ENCODE measurements at regions of chr19 and their contacts with region 1.

Region 1: GRCh38 chr19:46813839-46814363 is 25.5 kb upstream of the SLC1A5 start:
- DNase-seq: no peak
- H3K4me3 ChIP-seq: no peak overlapping the region
- H3K27ac ChIP-seq: no peak overlapping the region
- H3K4me1 ChIP-seq: no peaks in the 10 kb centered on the region
- H3K27me3 ChIP-seq: no peaks in the 10 kb centered on the region
- CTCF ChIP-seq: no peak

Region 2: DNA sequence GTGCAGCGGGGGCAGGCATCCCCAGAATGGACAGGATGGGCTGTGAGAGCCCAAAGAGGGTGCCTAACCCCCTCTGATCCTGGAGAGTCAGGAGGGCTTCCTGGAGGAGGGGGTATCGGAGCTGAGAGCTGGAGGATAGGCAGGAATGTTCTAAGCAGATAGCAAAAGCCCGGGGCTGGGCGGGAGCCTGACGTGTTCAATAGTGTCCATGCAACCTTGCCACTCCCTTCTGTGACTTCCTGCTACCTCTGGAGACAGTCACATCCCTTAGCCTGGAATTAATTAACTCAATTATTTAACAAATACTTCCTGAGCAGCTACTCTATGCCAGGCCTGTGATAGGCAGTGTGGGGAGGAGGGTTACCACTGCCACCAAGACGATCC is 25.8 kb after region 1 on chr19:
- CTCF ChIA-PET with region 1: no interaction called
- dilution Hi-C with region 1: no loop called
- in situ Hi-C with region 1: no loop called
- intact Hi-C with region 1: no loop called
- DNase-seq: no peak
- H3K4me3 ChIP-seq: no peak overlapping the region
- H3K27ac ChIP-seq: no peak overlapping the region
- H3K4me1 ChIP-seq: peaks cover 10% of the 10 kb centered on the region
- H3K27me3 ChIP-seq: no peaks in the 10 kb centered on the region
- CTCF ChIP-seq: no peak

Region 3: GRCh38 chr19:46850228-46851203 is 36.6 kb after region 1 on chr19 and contains the start of gene AP2S1:
- CTCF ChIA-PET with region 1: no interaction called
- dilution Hi-C with region 1: loop called (anchors 5 kb)
- in situ Hi-C with region 1: no loop called
- intact Hi-C with region 1: no loop called
- DNase-seq: peak; percentile 98
- H3K4me3 ChIP-seq: peak within 1 kb of the TSS; percentile 54 to 93 (median 89)
- H3K27ac ChIP-seq: peak within 1 kb of the TSS; percentile 73
- H3K4me1 ChIP-seq: peaks cover 6% of the 10 kb centered on the region
- H3K27me3 ChIP-seq: no peaks in the 10 kb centered on the region
- CTCF ChIP-seq: no peak
- total RNA-seq, gene AP2S1: 67.5 to 257 TPM

Measured in mammary epithelial cell (primary cell).